Activated B cell treated with CpG ODN at 0.5 μM for 24 hours (primary cell): ENCODE measurements at regions of chr11 and their contacts with region 1.

Region 1: DNA sequence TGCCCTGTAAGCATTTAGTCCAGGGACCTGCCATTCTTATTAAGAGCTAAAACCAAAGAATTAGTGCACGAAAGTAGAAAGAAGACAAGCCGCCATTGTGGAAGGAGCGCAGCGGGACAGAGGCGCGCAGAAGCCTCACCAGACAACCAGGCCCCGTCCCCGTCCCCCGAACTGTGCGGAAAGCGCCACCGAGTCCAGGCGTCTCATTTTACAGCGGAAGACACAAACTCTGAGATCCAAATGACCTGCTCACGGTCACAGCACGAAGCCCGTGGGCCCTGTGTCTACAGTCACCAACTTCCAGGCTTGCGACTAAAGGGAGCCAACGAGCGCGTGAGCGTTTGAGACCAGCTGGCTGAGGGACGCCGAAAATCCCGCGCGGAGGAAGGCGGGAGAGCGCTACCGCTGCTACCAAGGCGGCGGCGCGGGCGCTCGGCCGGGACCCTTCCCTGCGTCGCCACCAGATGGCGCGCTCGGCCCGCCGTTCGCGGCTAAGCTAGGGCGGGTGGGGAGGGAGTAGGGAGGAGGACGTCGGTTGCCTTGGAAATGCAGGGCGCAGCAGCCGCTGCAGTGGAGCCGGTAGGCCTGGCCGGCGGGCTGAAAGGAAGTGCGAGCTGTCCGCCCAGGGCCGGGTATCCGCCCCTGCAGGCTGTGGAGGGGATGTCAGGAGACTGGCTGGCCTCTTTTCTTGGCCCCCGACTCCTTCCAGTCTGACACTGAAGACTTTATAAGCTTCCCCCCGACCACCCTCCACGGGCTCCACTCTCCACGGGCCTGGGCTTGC is 434 bp upstream of the CCDC83 start:
- DNase-seq: peak; percentile 88
- ATAC-seq: peak; percentile 91
- H3K4me3 Mint-ChIP-seq: peak overlapping the region; percentile 90
- H3K27ac Mint-ChIP-seq: peak overlapping the region; percentile 79
- H3K4me1 Mint-ChIP-seq: peaks cover 8% of the 10 kb centered on the region
- H3K27me3 Mint-ChIP-seq: peaks cover 3% of the 10 kb centered on the region
- CTCF ChIP-seq: peak; percentile 65

Region 2: DNA sequence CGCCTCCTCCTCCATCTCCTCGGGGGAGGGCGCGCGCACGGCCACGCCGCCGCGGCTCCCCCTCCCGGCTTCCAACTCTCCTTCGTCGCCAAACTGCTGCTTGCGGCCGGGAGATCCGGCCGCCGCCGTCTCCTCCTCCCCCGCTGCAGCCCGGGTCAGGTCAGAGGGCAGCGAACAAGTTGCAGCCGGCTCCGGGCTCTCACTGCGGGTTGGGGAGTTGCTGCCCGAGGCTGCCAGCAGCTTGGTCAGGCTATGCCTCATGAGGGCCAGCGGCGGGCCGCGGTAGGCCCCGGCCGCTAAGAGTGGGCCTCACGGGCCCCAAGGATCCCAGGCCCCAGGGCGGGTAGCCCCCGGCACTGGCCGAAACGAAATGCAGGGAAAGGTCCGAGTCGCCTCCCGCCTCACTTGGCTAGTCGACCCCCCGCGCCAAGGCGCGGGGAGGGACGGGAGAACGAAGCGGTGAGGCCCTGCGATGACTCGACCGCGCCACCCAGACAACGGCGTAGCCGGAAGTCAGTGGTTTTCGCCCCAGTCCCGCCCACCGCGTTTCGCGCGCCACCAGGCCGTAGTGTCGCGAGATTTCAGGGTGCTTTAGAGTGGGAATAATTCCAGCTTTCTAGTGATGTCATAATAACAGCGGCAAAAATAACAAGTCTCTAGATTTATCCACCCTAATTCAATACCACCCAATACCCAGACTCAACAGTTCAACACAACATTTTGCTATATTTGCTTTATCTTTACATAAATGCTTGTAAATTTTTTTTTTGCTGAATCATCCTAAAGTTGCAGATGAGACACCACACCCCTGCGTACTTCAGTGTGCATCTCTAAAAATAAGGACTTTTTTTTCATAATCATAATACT is 189.9 kb before region 1 on chr11 and contains the start of gene CREBZF:
- CTCF ChIA-PET with region 1: no interaction called
- POLR2A ChIA-PET with region 1: interaction called, 5 read pairs
- intact Hi-C with region 1: loop called (anchors 1 kb)
- DNase-seq: peak; percentile 96
- ATAC-seq: peak; percentile 86
- H3K4me3 Mint-ChIP-seq: peak within 1 kb of the TSS; percentile 95
- H3K27ac Mint-ChIP-seq: peak within 1 kb of the TSS; percentile 93
- H3K4me1 Mint-ChIP-seq: peaks cover 45% of the 10 kb centered on the region
- H3K27me3 Mint-ChIP-seq: no peaks in the 10 kb centered on the region
- CTCF ChIP-seq: no peak
- total RNA-seq, gene CREBZF: 46.1 and 60.3 TPM in 2 replicates

Region 3: GRCh38 chr11:86041975-86042378 is 187.2 kb after region 1 on chr11:
- CTCF ChIA-PET with region 1: interaction called, 5 read pairs
- POLR2A ChIA-PET with region 1: no interaction called
- intact Hi-C with region 1: loop called (anchors 10 kb)
- DNase-seq: no peak
- ATAC-seq: peak; percentile 91
- H3K4me3 Mint-ChIP-seq: peak overlapping the region; percentile 6
- H3K27ac Mint-ChIP-seq: peak overlapping the region; percentile 19
- H3K4me1 Mint-ChIP-seq: peaks cover 71% of the 10 kb centered on the region
- H3K27me3 Mint-ChIP-seq: no peaks in the 10 kb centered on the region
- CTCF ChIP-seq: no peak

Region 4: DNA sequence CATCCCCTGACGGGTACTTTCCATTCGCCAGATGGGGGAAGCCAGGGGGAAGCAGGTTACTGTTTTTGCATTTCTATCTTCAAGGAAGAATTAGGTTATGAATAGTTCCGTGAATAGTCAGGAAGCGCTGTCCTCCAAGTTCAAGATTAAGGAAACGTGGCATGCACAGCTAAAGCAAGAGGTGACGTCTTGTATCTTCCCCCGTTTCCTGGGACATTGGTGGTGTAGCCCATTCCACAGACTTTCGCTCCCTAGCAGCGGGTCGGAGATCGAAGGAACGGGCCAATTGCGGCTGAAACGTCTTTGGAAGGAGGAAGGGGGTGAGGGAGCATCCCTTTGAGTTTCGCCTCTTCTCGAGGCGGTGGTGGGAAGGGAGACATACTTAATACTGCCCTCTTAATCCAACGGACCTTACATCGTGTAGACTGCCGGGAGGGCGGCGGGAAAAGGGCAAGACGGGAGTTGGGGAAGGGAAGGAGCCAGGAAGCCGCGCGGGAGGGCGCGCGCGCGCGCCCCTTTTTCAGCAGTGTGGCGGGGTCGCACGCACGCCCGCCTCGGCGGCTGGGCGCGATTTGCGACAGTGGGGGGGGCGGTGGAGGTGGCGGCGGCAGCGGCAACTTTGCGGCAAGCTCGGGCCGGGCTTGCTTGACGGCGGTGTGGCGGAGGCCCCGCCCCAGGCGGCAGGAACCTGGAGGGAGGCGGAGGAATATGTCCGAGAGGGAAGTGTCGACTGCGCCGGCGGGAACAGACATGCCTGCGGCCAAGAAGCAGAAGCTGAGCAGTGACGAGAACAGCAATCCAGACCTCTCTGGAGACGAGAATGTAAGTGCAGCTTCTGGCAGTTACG is 390.0 kb after region 1 on chr11 and contains the start of gene EED:
- CTCF ChIA-PET with region 1: no interaction called
- POLR2A ChIA-PET with region 1: interaction called, 3 read pairs
- intact Hi-C with region 1: loop called (anchors 1 kb)
- DNase-seq: peak; percentile 90
- ATAC-seq: peak; percentile 87
- H3K4me3 Mint-ChIP-seq: no peak within 1 kb of the TSS
- H3K27ac Mint-ChIP-seq: no peak within 1 kb of the TSS
- H3K4me1 Mint-ChIP-seq: peaks cover 31% of the 10 kb centered on the region
- H3K27me3 Mint-ChIP-seq: no peaks in the 10 kb centered on the region
- CTCF ChIP-seq: no peak
- total RNA-seq, gene EED: 55.2 and 63.7 TPM in 2 replicates

Region 5: DNA sequence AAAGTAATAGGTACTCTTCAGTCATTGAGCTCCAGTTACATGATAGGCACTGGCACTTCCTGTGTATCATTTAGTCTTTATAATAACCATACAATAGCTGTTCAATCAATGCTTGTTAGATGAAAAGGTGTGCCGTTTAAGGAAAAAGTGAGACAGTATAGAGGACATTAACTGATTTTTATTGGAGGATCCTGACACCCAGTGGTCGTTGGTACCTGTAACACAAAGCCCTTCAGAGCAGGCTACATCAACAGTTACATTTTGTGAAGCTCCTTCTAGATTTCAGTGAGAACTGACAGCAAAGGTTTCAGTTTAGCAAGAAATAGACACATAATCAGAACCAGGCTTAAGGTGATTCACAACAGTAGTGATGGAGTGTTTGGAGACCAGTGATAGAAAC is 564.2 kb after region 1 on chr11:
- CTCF ChIA-PET with region 1: no interaction called
- POLR2A ChIA-PET with region 1: no interaction called
- intact Hi-C with region 1: loop called (anchors 1 kb)
- DNase-seq: no peak
- ATAC-seq: no peak
- H3K4me3 Mint-ChIP-seq: no peak overlapping the region
- H3K27ac Mint-ChIP-seq: no peak overlapping the region
- H3K4me1 Mint-ChIP-seq: no peaks in the 10 kb centered on the region
- H3K27me3 Mint-ChIP-seq: no peaks in the 10 kb centered on the region
- CTCF ChIP-seq: no peak

Region 6: DNA sequence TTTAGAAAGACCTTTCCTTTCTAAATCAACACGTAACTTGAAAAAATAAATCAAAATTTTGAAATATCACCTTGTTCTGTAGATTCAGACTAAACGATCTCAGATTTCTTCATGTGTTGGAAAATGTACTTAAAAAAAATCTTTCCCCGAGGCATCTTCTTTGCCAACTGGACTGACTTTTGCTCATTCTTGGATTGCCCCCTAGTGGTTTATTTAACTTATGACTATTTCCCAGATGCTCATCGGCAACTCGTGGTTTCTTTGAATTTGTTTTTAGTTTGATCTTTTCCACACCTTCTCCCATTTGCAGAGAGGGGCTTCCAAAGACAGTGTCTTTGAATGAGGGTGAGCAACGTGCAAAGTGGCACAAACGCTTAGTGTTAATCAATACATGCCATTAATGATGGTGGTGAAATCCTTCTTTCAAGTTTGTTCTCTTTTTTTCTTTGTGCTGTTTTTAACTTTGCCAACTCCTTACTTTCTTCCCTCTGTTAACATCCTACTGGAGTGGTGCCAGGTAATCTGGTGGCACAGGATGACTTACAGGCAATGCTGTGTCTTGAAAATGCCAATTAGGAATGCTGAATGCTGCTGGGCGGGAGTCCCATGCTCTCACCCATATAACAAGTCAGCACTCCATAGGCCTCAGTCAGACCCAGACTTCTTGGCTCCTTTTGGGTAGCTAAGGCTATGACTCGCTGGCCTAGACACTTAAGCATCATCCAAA is 963.9 kb after region 1 on chr11:
- CTCF ChIA-PET with region 1: interaction called, 7 read pairs
- POLR2A ChIA-PET with region 1: no interaction called
- intact Hi-C with region 1: loop called (anchors 1 kb)
- DNase-seq: no peak
- ATAC-seq: no peak
- H3K4me3 Mint-ChIP-seq: no peak overlapping the region
- H3K27ac Mint-ChIP-seq: no peak overlapping the region
- H3K4me1 Mint-ChIP-seq: no peaks in the 10 kb centered on the region
- H3K27me3 Mint-ChIP-seq: peaks cover 12% of the 10 kb centered on the region
- CTCF ChIP-seq: no peak